ENCODE measurements at regions of chr4 and their contacts with region 1.

Region 1: DNA sequence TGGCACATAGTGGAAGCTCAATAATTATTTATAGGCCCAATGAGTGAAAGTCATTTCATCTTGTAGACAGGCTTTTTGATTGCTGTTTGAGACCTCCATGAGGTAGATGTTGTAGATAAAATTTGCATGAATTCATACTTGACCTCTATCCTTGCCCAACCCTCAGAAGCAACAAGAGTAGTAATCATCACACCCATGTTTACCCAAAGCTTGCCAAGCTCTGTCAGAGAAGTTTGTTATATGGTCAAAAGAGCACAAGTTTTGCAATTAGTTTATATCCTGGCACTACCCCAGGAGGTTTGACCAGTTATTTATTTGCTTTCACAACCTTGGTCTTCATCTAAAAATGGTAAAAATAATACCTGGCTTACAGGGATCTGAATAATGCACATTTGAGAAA is 20.8 kb downstream of the ADH7 start:
- DNase-seq: no peak
- ATAC-seq: no peak
- H3K4me3 ChIP-seq: no peak overlapping the region
- H3K4me3 Mint-ChIP-seq: no peak overlapping the region
- H3K27ac ChIP-seq: no peak overlapping the region
- H3K27ac Mint-ChIP-seq: no peak overlapping the region
- H3K4me1 ChIP-seq: no peaks in the 10 kb centered on the region
- H3K4me1 Mint-ChIP-seq: no peaks in the 10 kb centered on the region
- H3K27me3 ChIP-seq: peaks cover 0 to 3% of the 10 kb centered on the region in 2 experiments
- H3K27me3 Mint-ChIP-seq: peaks cover 0 to 3% of the 10 kb centered on the region in 2 donors

Region 2: DNA sequence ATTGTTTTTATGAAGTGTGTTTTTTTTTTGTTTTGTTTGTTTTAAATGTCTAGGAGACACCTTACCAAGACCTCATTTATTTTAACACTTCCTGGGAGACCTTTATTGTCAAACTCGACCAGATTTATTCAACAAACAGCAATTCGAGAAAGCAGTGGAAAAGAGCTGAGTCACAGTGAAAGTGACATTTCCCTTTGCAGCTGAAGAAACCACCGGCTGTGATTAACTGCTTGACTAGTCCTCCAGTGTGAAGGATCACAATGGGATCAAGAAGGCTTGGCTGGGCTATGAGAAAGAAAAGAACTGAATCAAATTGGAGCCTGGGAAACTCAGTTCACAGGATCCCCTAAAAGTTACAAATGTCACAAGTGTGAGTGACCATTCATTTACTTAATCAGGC is 32.7 kb after region 1 on chr4:
- CTCF ChIA-PET with region 1: no interaction called
- POLR2A ChIA-PET with region 1: no interaction called
- DNase-seq: no peak
- ATAC-seq: no peak
- H3K4me3 ChIP-seq: no peak overlapping the region
- H3K4me3 Mint-ChIP-seq: no peak overlapping the region
- H3K27ac ChIP-seq: no peak overlapping the region
- H3K27ac Mint-ChIP-seq: no peak overlapping the region
- H3K4me1 ChIP-seq: no peaks in the 10 kb centered on the region
- H3K4me1 Mint-ChIP-seq: peaks cover 0 to 2% (median 0%) of the 10 kb centered on the region in 3 donors
- H3K27me3 ChIP-seq: no peaks in the 10 kb centered on the region
- H3K27me3 Mint-ChIP-seq: peaks cover 3 to 8% of the 10 kb centered on the region in 2 donors

Region 3: GRCh38 chr4:99965674-99966350 is 551.4 kb after region 1 on chr4:
- CTCF ChIA-PET with region 1: no interaction called
- POLR2A ChIA-PET with region 1: interaction called in 1 of 2 experiments, 11 read pairs
- DNase-seq: peak in 1 of 35 experiments; percentile 48
- ATAC-seq: peak; percentile 45 to 93 (median 75)
- H3K4me3 ChIP-seq: no peak overlapping the region
- H3K4me3 Mint-ChIP-seq: peak overlapping the region in 2 of 3 donors; percentile 9 to 36
- H3K27ac ChIP-seq: peak overlapping the region; percentile 5
- H3K27ac Mint-ChIP-seq: peak overlapping the region in 1 of 2 donors; percentile 17
- H3K4me1 ChIP-seq: peaks cover 2 to 12% of the 10 kb centered on the region in 2 experiments
- H3K4me1 Mint-ChIP-seq: peaks cover 21 to 23% (median 23%) of the 10 kb centered on the region in 3 donors
- H3K27me3 ChIP-seq: peaks cover 0 to 2% of the 10 kb centered on the region in 2 experiments
- H3K27me3 Mint-ChIP-seq: no peaks in the 10 kb centered on the region